Activated CD4-positive, alpha-beta T cell treated with anti-CD3 and anti-CD28 coated beads for 36 hours (primary cell): ENCODE measurements at regions of chr11 and their contacts with region 1.

Region 1: GRCh38 chr11:695538-696248 is at the start of gene TMEM80:
- DNase-seq: peak; percentile 99
- ATAC-seq: peak; percentile 81
- H3K4me3 Mint-ChIP-seq: peak within 1 kb of the TSS; percentile 84
- H3K27ac Mint-ChIP-seq: peak within 1 kb of the TSS; percentile 94
- H3K4me1 Mint-ChIP-seq: peaks cover 51% of the 10 kb centered on the region
- H3K27me3 Mint-ChIP-seq: no peaks in the 10 kb centered on the region
- total RNA-seq, gene TMEM80: 11.4 to 11.9 TPM

Region 2: GRCh38 chr11:406978-407739 is 288.5 kb before region 1 on chr11:
- CTCF ChIA-PET with region 1: interaction called, 3 read pairs
- POLR2A ChIA-PET with region 1: no interaction called
- intact Hi-C with region 1: loop called in 1 of 2 experiments (anchors 1 kb)
- DNase-seq: peak; percentile 93
- ATAC-seq: peak; percentile 90
- H3K4me3 Mint-ChIP-seq: no peak overlapping the region
- H3K27ac Mint-ChIP-seq: no peak overlapping the region
- H3K4me1 Mint-ChIP-seq: peaks cover 5% of the 10 kb centered on the region
- H3K27me3 Mint-ChIP-seq: no peaks in the 10 kb centered on the region

Region 3: GRCh38 chr11:535519-536454 is 159.9 kb before region 1 on chr11 and contains the start of gene HRAS:
- CTCF ChIA-PET with region 1: no interaction called
- POLR2A ChIA-PET with region 1: no interaction called
- intact Hi-C with region 1: loop called in 1 of 2 experiments (anchors 1 kb)
- DNase-seq: peak; percentile 98
- ATAC-seq: peak; percentile 93
- H3K4me3 Mint-ChIP-seq: peak within 1 kb of the TSS; percentile 79
- H3K27ac Mint-ChIP-seq: peak within 1 kb of the TSS; percentile 81
- H3K4me1 Mint-ChIP-seq: peaks cover 17% of the 10 kb centered on the region
- H3K27me3 Mint-ChIP-seq: no peaks in the 10 kb centered on the region
- total RNA-seq, gene HRAS: 26.8 to 41.9 TPM

Region 4: DNA sequence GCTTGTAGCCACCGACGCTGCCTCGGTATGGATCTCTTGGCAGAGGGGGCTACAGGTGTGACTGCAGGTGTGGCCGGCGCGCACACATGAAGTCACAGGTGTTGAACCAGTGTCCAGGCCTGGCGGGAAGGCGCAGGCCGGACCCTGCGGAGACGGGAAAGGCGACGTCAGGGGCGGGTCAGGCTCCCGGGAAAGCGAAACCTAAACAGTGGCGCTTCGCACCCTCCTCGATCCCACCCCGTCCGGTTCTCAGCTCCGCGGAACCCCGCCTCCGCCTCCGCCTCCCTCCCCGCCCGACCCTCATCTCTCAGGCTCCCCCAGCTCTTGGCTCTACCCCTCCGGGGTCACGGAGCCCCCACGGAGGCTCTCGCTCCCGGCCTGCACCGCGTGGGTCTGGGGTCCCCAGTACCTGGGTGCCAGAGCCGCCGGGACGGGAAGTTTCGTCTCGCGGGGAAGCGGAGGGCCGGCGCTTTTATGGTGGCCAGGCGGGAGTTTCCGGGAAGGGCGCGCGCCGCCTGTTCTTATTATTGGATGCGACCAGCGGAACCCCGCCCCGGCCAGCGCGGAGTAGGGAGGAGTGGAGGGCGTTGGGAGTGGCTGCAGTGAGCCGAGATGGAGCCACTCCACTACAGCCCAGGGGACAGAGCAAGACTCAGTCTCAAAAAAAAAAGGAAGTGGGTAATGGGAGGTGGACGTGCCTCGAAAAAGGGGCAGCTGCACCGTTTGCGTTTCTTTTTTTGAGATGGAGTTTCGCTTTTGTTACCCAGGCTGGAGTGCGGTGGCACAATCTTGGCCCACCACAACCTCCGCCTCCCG is 80.0 kb before region 1 on chr11 and contains the start of gene IRF7:
- CTCF ChIA-PET with region 1: interaction called, 3 read pairs
- POLR2A ChIA-PET with region 1: no interaction called
- intact Hi-C with region 1: loop called in 1 of 2 experiments (anchors 1 kb)
- DNase-seq: peak; percentile 93
- ATAC-seq: peak; percentile 81
- H3K4me3 Mint-ChIP-seq: peak within 1 kb of the TSS; percentile 85
- H3K27ac Mint-ChIP-seq: peak within 1 kb of the TSS; percentile 95
- H3K4me1 Mint-ChIP-seq: peaks cover 13% of the 10 kb centered on the region
- H3K27me3 Mint-ChIP-seq: no peaks in the 10 kb centered on the region
- total RNA-seq, gene IRF7: 57.1 to 62.6 TPM

Region 5: GRCh38 chr11:747158-748006 is 51.7 kb after region 1 on chr11 and contains the start of gene TALDO1:
- CTCF ChIA-PET with region 1: no interaction called
- POLR2A ChIA-PET with region 1: no interaction called
- intact Hi-C with region 1: loop called (anchors 1 to 5 kb)
- DNase-seq: peak; percentile 92
- ATAC-seq: peak; percentile 91
- H3K4me3 Mint-ChIP-seq: peak within 1 kb of the TSS; percentile 82
- H3K27ac Mint-ChIP-seq: peak within 1 kb of the TSS; percentile 72
- H3K4me1 Mint-ChIP-seq: peaks cover 20% of the 10 kb centered on the region
- H3K27me3 Mint-ChIP-seq: no peaks in the 10 kb centered on the region
- total RNA-seq, gene TALDO1: 239 to 246 TPM

Region 6: GRCh38 chr11:809287-810039 is 113.8 kb after region 1 on chr11 and contains the start of gene RPLP2:
- CTCF ChIA-PET with region 1: no interaction called
- POLR2A ChIA-PET with region 1: no interaction called
- intact Hi-C with region 1: loop called in 1 of 2 experiments (anchors 1 kb)
- DNase-seq: peak; percentile 99
- ATAC-seq: peak; percentile 86
- H3K4me3 Mint-ChIP-seq: peak within 1 kb of the TSS; percentile 94
- H3K27ac Mint-ChIP-seq: peak within 1 kb of the TSS; percentile 97
- H3K4me1 Mint-ChIP-seq: peaks cover 30% of the 10 kb centered on the region
- H3K27me3 Mint-ChIP-seq: no peaks in the 10 kb centered on the region
- total RNA-seq, gene RPLP2: 2,132 to 3,230 TPM